ENCODE measurements at regions of chr19 and their contacts with region 1.

Region 1: GRCh38 chr19:49097455-49098288 is 12.4 kb downstream of the SNRNP70 start:
- DNase-seq: peak; percentile 84
- ATAC-seq: peak; percentile 87
- H3K4me3 Mint-ChIP-seq: no peak overlapping the region
- H3K27ac Mint-ChIP-seq: peak overlapping the region; percentile 80
- H3K4me1 Mint-ChIP-seq: peaks cover 24% of the 10 kb centered on the region
- H3K27me3 Mint-ChIP-seq: no peaks in the 10 kb centered on the region

Region 2: DNA sequence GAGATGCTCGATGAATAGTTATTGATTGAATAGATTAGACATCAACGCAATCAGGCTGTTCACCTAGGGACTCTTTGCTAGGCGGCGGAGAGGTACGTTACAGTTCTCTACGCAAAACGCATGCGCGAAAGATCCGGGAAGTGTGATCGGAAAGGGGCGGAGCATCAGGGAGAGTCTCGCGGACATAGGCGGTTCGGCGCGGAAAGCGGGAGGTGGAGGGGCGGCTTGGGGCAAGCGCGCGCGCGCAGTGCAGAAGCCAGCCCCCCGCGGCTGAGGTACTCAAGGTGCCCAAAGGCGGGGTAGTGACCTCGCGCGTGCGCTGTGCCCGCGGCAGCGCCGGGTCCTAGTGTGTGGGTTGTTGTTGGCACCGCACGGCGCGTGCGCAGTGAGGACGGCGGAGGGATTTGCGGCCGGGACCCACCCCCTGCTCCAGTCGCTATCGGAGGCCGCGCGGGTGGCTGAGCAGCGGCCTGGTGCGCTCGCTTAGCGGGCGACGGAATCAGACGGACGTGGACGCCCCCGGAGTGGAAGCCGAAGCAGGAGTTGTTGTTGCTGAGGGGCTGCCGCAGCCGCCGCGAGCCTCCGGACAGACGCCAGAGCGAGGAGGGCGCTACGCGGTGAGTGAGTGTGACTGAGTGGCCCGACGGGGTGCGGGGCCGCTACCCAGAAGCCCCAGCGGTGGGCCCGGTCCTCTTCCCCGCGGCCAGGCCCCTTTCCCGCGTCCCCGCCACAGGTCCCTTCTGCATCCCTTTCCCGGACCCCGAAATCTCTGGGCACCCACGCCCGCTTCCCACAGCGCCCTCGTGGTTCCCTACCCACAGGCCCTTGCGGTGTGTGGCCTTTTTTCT is 12.4 kb before region 1 on chr19 and contains the start of gene SNRNP70:
- CTCF ChIA-PET with region 1: interaction called, 34 read pairs
- DNase-seq: peak; percentile 99
- ATAC-seq: peak; percentile 95
- H3K4me3 Mint-ChIP-seq: peak within 1 kb of the TSS; percentile 94
- H3K27ac Mint-ChIP-seq: peak within 1 kb of the TSS; percentile 90
- H3K4me1 Mint-ChIP-seq: peaks cover 30% of the 10 kb centered on the region
- H3K27me3 Mint-ChIP-seq: no peaks in the 10 kb centered on the region
- total RNA-seq, gene SNRNP70: 222 to 224 TPM

Region 3: GRCh38 chr19:49127674-49128544 is 30.2 kb after region 1 on chr19:
- CTCF ChIA-PET with region 1: interaction called, 14 read pairs
- DNase-seq: peak; percentile 97
- ATAC-seq: peak; percentile 95
- H3K4me3 Mint-ChIP-seq: peak overlapping the region; percentile 71
- H3K27ac Mint-ChIP-seq: peak overlapping the region; percentile 79
- H3K4me1 Mint-ChIP-seq: peaks cover 9% of the 10 kb centered on the region
- H3K27me3 Mint-ChIP-seq: peaks cover 3% of the 10 kb centered on the region

Region 4: GRCh38 chr19:49148784-49149651 is 51.3 kb after region 1 on chr19:
- CTCF ChIA-PET with region 1: interaction called, 22 read pairs
- DNase-seq: peak; percentile 91
- ATAC-seq: peak; percentile 54
- H3K4me3 Mint-ChIP-seq: peak overlapping the region; percentile 28
- H3K27ac Mint-ChIP-seq: no peak overlapping the region
- H3K4me1 Mint-ChIP-seq: peaks cover 32% of the 10 kb centered on the region
- H3K27me3 Mint-ChIP-seq: peaks cover 60% of the 10 kb centered on the region

Region 5: DNA sequence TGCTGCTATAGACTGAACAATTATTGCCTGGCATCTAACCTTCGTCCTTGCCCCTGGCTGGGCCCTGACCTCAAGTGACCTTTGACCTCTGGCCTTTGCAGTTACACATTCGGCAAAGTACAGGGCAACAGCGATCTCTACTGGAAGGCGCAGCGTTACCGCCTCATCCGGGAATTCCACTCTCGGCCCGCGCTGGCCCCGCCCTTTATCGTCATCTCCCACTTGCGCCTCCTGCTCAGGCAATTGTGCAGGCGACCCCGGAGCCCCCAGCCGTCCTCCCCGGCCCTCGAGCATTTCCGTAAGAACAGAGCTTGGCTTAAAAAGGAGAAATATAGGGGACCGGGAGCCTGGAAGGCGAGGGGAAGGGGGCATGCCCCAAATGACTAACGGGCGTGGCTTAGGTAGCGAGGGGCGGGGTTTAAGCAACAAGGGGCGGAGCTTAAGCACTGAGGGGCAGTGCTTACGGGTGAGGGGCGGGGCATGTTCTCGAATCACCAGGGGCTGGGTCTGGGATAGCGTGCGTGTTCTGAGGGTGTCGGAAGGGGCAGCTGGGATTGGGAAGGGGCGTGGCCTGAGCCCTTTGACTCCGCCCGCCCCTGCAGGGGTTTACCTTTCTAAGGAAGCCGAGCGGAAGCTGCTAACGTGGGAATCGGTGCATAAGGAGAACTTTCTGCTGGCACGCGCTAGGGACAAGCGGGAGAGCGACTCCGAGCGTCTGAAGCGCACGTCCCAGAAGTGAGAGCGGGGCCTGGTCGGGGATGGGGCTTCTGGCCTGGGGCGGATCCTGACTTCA is 112.6 kb after region 1 on chr19:
- CTCF ChIA-PET with region 1: interaction called, 20 read pairs
- DNase-seq: peak; percentile 51
- ATAC-seq: peak; percentile 64
- H3K4me3 Mint-ChIP-seq: no peak overlapping the region
- H3K27ac Mint-ChIP-seq: no peak overlapping the region
- H3K4me1 Mint-ChIP-seq: peaks cover 9% of the 10 kb centered on the region
- H3K27me3 Mint-ChIP-seq: peaks cover 6% of the 10 kb centered on the region

Region 6: GRCh38 chr19:49233163-49233562 is 135.5 kb after region 1 on chr19:
- CTCF ChIA-PET with region 1: no interaction called
- DNase-seq: no peak
- ATAC-seq: no peak
- H3K4me3 Mint-ChIP-seq: no peak overlapping the region
- H3K27ac Mint-ChIP-seq: no peak overlapping the region
- H3K4me1 Mint-ChIP-seq: peaks cover 11% of the 10 kb centered on the region
- H3K27me3 Mint-ChIP-seq: peaks cover 30% of the 10 kb centered on the region

Measured in activated CD8-positive, alpha-beta memory T cell treated with anti-CD3 and anti-CD28 coated beads, Interleukin-2, amount 10 ng/mL, durations not matched to agents 7 days and 5 days (primary cell).